T-cell (primary cell): ENCODE measurements at regions of chr15 and their contacts with region 1.

Region 1: GRCh38 chr15:83011271-83012075 is at the start of gene C15orf40:
- DNase-seq: peak; percentile 65 to 92 (median 74)
- ATAC-seq: peak; percentile 87 to 90 (median 88)
- H3K4me3 ChIP-seq: peak within 1 kb of the TSS; percentile 74 to 80
- H3K4me3 Mint-ChIP-seq: peak within 1 kb of the TSS; percentile 87 to 99 (median 98)
- H3K27ac ChIP-seq: peak within 1 kb of the TSS; percentile 39
- H3K27ac Mint-ChIP-seq: peak within 1 kb of the TSS; percentile 93 to 94
- H3K4me1 ChIP-seq: peaks cover 13 to 25% of the 10 kb centered on the region in 2 experiments
- H3K4me1 Mint-ChIP-seq: peaks cover 48 to 55% (median 54%) of the 10 kb centered on the region in 3 donors
- H3K27me3 ChIP-seq: no peaks in the 10 kb centered on the region
- H3K27me3 Mint-ChIP-seq: no peaks in the 10 kb centered on the region
- total RNA-seq, gene C15orf40: 13.8 to 40.5 (median 37.7) TPM

Region 2: DNA sequence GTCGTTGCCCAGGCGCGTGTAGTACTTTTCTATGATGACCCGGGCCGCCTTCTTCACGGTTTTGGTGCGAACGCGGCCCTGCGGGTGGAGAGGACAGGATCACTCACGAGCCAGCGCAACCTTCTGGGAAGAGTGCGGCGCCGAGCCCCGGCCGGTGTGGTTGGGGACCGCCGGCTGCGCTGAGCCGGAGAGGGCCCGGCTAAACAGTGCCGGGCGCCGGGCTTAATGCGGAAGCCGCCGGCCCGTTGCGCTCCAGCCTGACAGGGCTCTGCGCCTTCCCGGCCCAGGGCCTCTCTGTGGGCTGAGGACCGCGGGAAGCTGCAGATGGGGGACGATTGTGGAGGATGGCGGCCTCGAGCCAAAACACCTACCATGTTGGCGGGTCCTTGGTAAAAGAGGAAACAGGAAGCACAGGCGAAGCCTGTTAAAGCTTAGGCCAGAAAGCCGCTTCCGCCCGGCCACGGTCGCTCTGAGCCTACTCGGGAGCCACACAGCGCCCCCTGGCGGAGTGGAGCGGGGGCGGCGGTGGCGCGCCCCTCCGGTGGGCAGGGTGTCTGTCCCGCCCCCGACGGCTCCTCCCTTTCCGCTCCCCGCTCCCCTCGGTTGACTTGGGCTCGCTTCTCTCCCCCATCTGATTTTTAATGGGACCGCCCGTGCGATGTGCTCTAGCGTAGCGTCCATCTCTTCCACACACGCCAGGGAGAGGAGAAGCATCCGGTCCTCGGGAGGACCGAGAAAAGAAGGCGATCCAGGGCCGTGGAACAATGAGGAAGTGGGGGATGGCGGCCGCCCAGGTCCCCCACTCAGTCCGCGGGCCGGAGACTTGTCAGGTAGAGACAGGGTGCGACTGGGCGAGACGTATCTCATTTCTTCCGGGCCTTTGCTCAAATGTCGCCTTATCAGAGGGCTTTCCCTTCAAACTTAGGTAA is 471.2 kb before region 1 on chr15 and contains the start of gene RPS17:
- CTCF ChIA-PET with region 1: interaction called, 4 to 10 read pairs
- POLR2A ChIA-PET with region 1: no interaction called
- DNase-seq: peak; percentile 95 to 99 (median 98)
- ATAC-seq: peak; percentile 92 to 97 (median 94)
- H3K4me3 ChIP-seq: peak within 1 kb of the TSS; percentile 68 to 81
- H3K4me3 Mint-ChIP-seq: peak within 1 kb of the TSS; percentile 90 to 95 (median 93)
- H3K27ac ChIP-seq: peak within 1 kb of the TSS; percentile 85
- H3K27ac Mint-ChIP-seq: peak within 1 kb of the TSS; percentile 97
- H3K4me1 ChIP-seq: peaks cover 2 to 25% of the 10 kb centered on the region in 2 experiments
- H3K4me1 Mint-ChIP-seq: peaks cover 29 to 37% (median 35%) of the 10 kb centered on the region in 3 donors
- H3K27me3 ChIP-seq: peaks cover 0 to 5% of the 10 kb centered on the region in 2 experiments
- H3K27me3 Mint-ChIP-seq: no peaks in the 10 kb centered on the region
- total RNA-seq, gene RPS17: 2,045 to 2,777 (median 2,292) TPM

Region 3: DNA sequence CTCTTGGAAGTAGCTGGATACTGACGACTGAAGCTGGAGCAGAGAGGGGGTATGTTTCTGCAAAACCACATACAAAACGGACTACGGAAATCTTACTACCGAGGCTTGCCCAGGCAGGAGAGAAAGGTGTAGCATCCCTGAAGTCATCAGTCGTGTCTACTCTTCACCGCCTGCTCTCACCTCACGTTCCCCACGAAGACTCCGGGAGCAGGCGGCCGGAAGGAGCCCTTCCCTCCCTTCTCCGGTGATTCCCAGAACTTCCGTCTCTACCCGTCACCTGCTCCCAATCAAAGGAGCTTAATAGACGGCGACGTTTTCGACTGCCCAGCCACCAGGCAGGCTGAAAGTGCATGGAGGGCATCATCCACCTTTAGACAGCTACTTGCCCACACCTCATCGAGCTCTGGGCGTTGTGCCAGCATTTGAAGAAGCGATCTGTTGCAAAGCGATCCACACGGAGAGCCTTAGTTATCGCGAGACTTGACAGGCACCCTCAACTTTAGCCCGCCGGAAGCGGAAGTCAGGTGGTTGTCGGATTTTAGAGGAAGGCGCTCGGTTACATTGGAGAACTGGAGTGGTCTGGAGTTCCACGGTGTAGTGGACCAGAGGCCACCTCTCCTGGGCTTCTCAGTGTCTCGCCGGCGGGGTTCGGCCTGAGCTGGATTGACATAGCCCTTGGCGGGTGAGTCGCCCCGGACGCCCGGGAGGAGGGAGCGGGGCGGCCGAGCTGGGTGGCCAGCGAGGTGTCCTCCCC is 25.6 kb before region 1 on chr15 and contains the start of gene RAMAC:
- CTCF ChIA-PET with region 1: interaction called in 1 of 2 experiments, 18 read pairs
- POLR2A ChIA-PET with region 1: interaction called in 1 of 2 experiments, 3 read pairs
- DNase-seq: peak; percentile 76 to 98 (median 93)
- ATAC-seq: peak; percentile 87 to 95 (median 94)
- H3K4me3 ChIP-seq: peak within 1 kb of the TSS; percentile 94 to 99
- H3K4me3 Mint-ChIP-seq: peak within 1 kb of the TSS; percentile 89 to 99 (median 99)
- H3K27ac ChIP-seq: peak within 1 kb of the TSS; percentile 71
- H3K27ac Mint-ChIP-seq: peak within 1 kb of the TSS; percentile 84 to 96
- H3K4me1 ChIP-seq: peaks cover 21 to 24% of the 10 kb centered on the region in 2 experiments
- H3K4me1 Mint-ChIP-seq: peaks cover 30 to 36% (median 31%) of the 10 kb centered on the region in 3 donors
- H3K27me3 ChIP-seq: no peaks in the 10 kb centered on the region
- H3K27me3 Mint-ChIP-seq: no peaks in the 10 kb centered on the region
- total RNA-seq, gene RAMAC: 15.7 to 21.4 (median 17.4) TPM

Region 4: DNA sequence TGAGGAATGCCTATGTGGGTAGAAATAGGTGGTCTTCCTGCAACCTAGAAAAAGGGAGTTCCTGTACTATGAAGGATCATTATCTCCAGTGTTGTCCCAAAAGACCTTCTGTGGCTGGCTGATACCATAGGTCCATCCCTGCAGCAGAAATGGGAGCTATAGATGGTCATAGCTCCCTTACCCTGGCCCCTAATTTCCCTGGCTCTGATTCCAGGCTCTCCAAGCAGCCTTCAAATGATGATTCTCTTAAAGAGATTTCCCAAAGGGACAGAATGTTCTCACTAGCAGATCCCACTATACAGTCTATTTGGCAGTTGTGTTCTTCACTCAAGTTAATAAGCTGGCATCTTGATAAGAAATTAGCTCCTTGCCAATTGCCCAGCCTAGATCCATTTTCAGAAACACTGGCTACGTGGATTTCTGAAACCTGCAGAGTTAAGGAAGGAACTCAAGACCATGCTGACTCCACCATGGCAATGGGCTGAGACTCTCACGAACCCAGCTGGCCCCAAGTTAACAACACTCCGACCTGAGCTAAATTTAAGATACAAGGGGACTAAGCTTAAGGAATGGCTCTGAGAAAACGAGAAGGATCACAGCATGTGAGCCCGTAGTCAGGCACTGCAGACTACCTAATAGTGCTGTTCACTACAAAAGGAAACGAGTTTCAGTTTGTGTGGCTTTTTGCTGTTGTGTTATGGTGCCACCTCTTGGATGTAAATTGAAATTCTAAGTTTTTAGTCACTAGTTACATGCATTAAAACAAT is 11.4 kb before region 1 on chr15:
- CTCF ChIA-PET with region 1: interaction called, 4 to 11 read pairs
- POLR2A ChIA-PET with region 1: interaction called in 1 of 2 experiments, 6 read pairs
- DNase-seq: peak in 19 of 35 experiments; percentile 3 to 72 (median 17)
- ATAC-seq: peak; percentile 82 to 91 (median 86)
- H3K4me3 ChIP-seq: no peak overlapping the region
- H3K4me3 Mint-ChIP-seq: peak overlapping the region; percentile 50 to 75 (median 52)
- H3K27ac ChIP-seq: peak overlapping the region; percentile 52
- H3K27ac Mint-ChIP-seq: peak overlapping the region; percentile 91 to 93
- H3K4me1 ChIP-seq: peaks cover 5 to 6% of the 10 kb centered on the region in 2 experiments
- H3K4me1 Mint-ChIP-seq: peaks cover 7 to 12% (median 10%) of the 10 kb centered on the region in 3 donors
- H3K27me3 ChIP-seq: no peaks in the 10 kb centered on the region
- H3K27me3 Mint-ChIP-seq: no peaks in the 10 kb centered on the region